ENCODE measurements at regions of chr10 and their contacts with region 1.

Region 1: GRCh38 chr10:124152916-124153826 is 59.8 kb upstream of the CHST15 start:
- DNase-seq: peak; percentile 99
- H3K4me3 Mint-ChIP-seq: no peak overlapping the region
- H3K27ac Mint-ChIP-seq: no peak overlapping the region
- H3K4me1 Mint-ChIP-seq: peaks cover 11% of the 10 kb centered on the region
- H3K27me3 Mint-ChIP-seq: no peaks in the 10 kb centered on the region
- CTCF ChIP-seq: no peak

Region 2: DNA sequence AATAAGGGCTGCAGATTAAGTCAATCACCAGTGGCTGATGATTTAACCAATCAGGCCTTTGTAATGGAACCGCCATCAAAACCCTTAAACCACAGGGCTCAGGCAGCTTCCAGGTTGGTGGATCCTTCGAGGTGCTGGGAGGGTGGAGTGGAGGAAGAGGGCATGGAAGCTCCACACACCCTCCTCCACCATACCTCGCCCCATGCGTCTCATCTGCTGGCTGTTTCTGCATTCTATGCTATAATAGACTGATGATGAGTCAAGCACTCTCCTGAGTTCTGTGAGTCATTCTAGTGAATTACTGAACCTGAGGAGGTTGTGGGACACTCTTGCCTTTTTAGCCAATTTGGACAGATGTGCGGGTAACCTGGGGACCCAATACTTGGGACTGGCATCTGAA is 103.7 kb before region 1 on chr10:
- CTCF ChIA-PET with region 1: no interaction called
- POLR2A ChIA-PET with region 1: no interaction called
- intact Hi-C with region 1: loop called (anchors 5 kb)
- DNase-seq: peak; percentile 78
- H3K4me3 Mint-ChIP-seq: no peak overlapping the region
- H3K27ac Mint-ChIP-seq: peak overlapping the region; percentile 47
- H3K4me1 Mint-ChIP-seq: peaks cover 28% of the 10 kb centered on the region
- H3K27me3 Mint-ChIP-seq: no peaks in the 10 kb centered on the region
- CTCF ChIP-seq: no peak

Region 3: GRCh38 chr10:124106241-124106879 is 46.8 kb before region 1 on chr10:
- CTCF ChIA-PET with region 1: interaction called, 5 read pairs
- POLR2A ChIA-PET with region 1: interaction called, 31 read pairs
- intact Hi-C with region 1: no loop called
- DNase-seq: peak; percentile 97
- H3K4me3 Mint-ChIP-seq: peak overlapping the region; percentile 70
- H3K27ac Mint-ChIP-seq: peak overlapping the region; percentile 99
- H3K4me1 Mint-ChIP-seq: peaks cover 40% of the 10 kb centered on the region
- H3K27me3 Mint-ChIP-seq: no peaks in the 10 kb centered on the region
- CTCF ChIP-seq: no peak

Region 4: GRCh38 chr10:124119946-124120345 is 33.2 kb before region 1 on chr10:
- CTCF ChIA-PET with region 1: interaction called, 3 read pairs
- POLR2A ChIA-PET with region 1: interaction called, 15 read pairs
- intact Hi-C with region 1: no loop called
- DNase-seq: no peak
- H3K4me3 Mint-ChIP-seq: no peak overlapping the region
- H3K27ac Mint-ChIP-seq: no peak overlapping the region
- H3K4me1 Mint-ChIP-seq: peaks cover 11% of the 10 kb centered on the region
- H3K27me3 Mint-ChIP-seq: no peaks in the 10 kb centered on the region
- CTCF ChIP-seq: no peak

Region 5: DNA sequence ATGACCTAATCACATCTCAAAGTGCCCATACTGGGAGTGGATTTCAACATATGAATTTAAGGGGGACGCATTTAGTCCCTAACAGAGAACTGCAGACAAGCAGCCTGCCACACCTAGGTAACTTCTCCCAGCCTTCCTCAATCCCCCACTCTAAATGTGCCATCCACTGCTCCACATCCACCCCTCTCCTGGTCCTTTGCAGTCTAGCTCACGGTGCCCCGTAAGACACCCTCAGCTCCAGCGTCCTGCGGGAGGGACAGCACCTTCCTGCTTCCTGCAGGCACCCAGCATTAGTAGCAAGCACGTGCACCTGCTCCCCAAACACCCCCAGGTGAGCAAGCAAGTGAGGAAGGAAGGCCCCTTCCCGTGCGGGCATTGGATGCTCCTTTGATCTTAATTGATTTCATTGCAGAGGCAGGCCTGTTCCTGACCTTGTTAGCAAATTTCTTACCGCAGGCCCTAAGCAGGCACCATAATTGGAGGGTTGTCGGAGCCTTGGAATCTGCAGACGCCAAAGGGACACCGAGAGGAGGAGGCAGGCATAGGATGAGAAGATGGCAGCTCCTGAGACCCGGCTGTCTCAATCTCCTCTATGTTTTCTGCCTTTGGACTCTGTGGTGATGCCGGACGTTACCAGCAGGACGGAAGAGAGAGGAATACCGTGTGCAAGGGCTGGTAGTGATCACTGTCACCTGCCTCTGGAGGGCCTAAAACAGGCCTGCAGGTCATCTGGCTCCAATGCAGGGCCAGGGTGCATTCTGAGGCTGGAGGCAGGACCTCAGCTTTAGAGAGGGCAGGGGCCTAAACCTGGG is 16.0 kb after region 1 on chr10:
- CTCF ChIA-PET with region 1: no interaction called
- POLR2A ChIA-PET with region 1: no interaction called
- intact Hi-C with region 1: no loop called
- DNase-seq: no peak
- H3K4me3 Mint-ChIP-seq: no peak overlapping the region
- H3K27ac Mint-ChIP-seq: no peak overlapping the region
- H3K4me1 Mint-ChIP-seq: no peaks in the 10 kb centered on the region
- H3K27me3 Mint-ChIP-seq: no peaks in the 10 kb centered on the region
- CTCF ChIP-seq: no peak

Region 6: DNA sequence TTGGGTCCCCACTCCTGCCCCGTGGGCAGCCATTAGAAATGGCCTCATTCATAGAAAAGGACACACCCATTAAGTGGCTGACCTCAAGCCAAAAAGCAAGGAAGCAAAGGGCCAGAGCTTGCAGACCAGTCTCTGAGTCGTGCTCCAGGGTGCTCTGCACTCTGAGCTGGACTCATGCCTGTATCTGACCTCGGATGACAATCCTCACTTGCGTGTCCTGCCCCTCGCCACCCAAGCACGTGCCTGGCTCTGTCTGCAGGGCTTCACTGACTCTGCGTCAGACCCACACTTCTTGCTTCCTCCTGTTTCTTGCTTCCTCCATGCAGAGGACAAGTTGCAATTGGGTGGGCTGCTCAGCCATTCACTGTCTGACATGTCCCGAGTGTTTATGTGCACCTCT is 126.7 kb after region 1 on chr10:
- CTCF ChIA-PET with region 1: no interaction called
- POLR2A ChIA-PET with region 1: no interaction called
- intact Hi-C with region 1: no loop called
- DNase-seq: no peak
- H3K4me3 Mint-ChIP-seq: no peak overlapping the region
- H3K27ac Mint-ChIP-seq: no peak overlapping the region
- H3K4me1 Mint-ChIP-seq: no peaks in the 10 kb centered on the region
- H3K27me3 Mint-ChIP-seq: peaks cover 2% of the 10 kb centered on the region
- CTCF ChIP-seq: no peak

Region 7: GRCh38 chr10:124378881-124379471 is 225.8 kb after region 1 on chr10:
- CTCF ChIA-PET with region 1: no interaction called
- POLR2A ChIA-PET with region 1: interaction called, 3 read pairs
- intact Hi-C with region 1: loop called (anchors 5 kb)
- DNase-seq: peak; percentile 94
- H3K4me3 Mint-ChIP-seq: no peak overlapping the region
- H3K27ac Mint-ChIP-seq: no peak overlapping the region
- H3K4me1 Mint-ChIP-seq: peaks cover 8% of the 10 kb centered on the region
- H3K27me3 Mint-ChIP-seq: no peaks in the 10 kb centered on the region
- CTCF ChIP-seq: no peak

Measured in MCF 10A (cell line).